GM10248 (cell line): ENCODE measurements at regions of chr10 and their contacts with region 1.

Region 1: GRCh38 chr10:46557316-46558121 is 1.1 kb upstream of the GPRIN2 start:
- DNase-seq: no peak
- CTCF ChIP-seq: no peak

Region 2: DNA sequence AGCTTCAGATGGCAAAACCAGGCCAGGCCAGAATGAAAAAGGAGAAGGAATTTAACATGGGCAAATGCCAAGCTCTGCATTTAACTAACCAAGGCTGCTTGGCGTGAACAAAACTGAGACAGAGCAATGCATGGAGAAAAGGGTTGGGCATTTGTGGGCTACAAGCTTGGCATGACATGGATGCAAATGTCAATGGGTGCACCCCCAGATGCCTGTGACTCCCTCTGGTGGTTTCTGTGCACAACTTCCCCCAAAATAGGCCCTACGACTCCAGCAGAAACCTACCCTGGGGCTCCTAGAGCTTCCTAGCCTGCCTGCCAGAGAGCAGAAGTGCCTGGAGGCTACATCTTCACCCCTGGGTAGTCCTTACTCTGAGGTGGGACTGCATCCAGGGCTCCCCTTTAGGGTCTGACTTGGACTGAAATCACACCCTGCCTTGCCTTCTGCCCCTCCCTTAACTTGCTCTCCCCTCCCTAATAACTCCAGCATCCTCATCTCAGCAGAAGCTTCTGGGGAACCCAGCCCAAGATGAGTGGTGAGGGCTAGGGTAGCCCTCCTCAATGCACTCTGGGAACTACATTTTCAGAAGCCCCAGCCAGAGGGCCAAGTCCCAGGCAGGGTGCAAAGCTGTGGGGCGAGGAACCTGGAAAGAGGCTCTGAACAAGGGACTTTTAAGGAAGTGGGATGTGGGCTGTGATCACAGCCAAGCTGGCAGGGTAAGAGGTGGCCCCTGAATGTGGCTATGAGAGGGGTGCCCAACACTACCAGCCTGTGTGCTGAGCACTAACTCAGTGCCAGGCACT is 12.3 kb before region 1 on chr10:
- CTCF ChIA-PET with region 1: interaction called, 21 read pairs
- POLR2A ChIA-PET with region 1: interaction called, 5 read pairs
- DNase-seq: no peak
- CTCF ChIP-seq: no peak